GM12878 (cell line): ENCODE measurements at regions of chr7 and their contacts with region 1.

Region 1: GRCh38 chr7:95427166-95427565 is 7.7 kb downstream of the PON2 start:
- DNase-seq: no peak
- ATAC-seq: no peak
- H3K4me3 ChIP-seq: no peak overlapping the region
- H3K27ac ChIP-seq: no peak overlapping the region
- H3K4me1 ChIP-seq: no peaks in the 10 kb centered on the region
- H3K27me3 ChIP-seq: no peaks in the 10 kb centered on the region
- CTCF ChIP-seq: no peak
- EP300 ChIP-seq: no peak
- POLR2A ChIP-seq: no peak
- RAD21 ChIP-seq: no peak

Region 2: GRCh38 chr7:95324431-95324830 is 102.7 kb before region 1 on chr7 and contains the start of gene PON1:
- CTCF ChIA-PET with region 1: no interaction called
- POLR2A ChIA-PET with region 1: no interaction called
- RAD21 ChIA-PET with region 1: no interaction called
- SMC1A ChIA-PET with region 1: no interaction called
- in situ Hi-C with region 1: no loop called
- intact Hi-C with region 1: no loop called
- DNase-seq: no peak
- ATAC-seq: peak; percentile 65
- H3K4me3 ChIP-seq: peak within 1 kb of the TSS; percentile 32; the same call in 1 of the 2 replicates
- H3K27ac ChIP-seq: no peak within 1 kb of the TSS
- H3K4me1 ChIP-seq: no peaks in the 10 kb centered on the region
- H3K27me3 ChIP-seq: no peaks in the 10 kb centered on the region
- CTCF ChIP-seq: no peak
- EP300 ChIP-seq: no peak
- POLR2A ChIP-seq: no peak
- RAD21 ChIP-seq: no peak
- polyA plus RNA-seq, gene PON1: 0.10 to 0.22 TPM

Region 3: DNA sequence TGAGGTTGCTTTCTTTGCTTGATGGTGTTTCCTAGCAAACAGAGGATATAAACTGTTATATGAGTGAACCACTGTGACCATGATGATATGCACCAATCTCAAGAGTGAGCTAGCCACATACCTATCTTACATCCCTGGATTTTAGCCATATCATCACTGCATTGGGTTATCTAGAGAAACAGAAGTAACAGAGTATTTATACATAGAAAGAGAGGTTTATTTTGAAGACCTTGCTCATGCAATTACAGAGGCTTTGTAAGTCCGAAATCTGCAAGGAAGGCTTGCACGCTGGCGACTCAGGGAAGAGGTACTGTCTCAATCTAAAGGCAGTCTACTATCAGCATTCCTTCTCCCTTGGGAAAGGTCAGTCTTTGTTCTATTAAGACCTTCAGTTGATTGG is 19.5 kb after region 1 on chr7:
- CTCF ChIA-PET with region 1: interaction called, 6 read pairs
- POLR2A ChIA-PET with region 1: interaction called, 4 read pairs
- RAD21 ChIA-PET with region 1: interaction called, 10 read pairs
- SMC1A ChIA-PET with region 1: interaction called, 12 read pairs
- in situ Hi-C with region 1: no loop called
- intact Hi-C with region 1: no loop called
- DNase-seq: no peak
- ATAC-seq: no peak
- H3K4me3 ChIP-seq: no peak overlapping the region
- H3K27ac ChIP-seq: no peak overlapping the region
- H3K4me1 ChIP-seq: no peaks in the 10 kb centered on the region
- H3K27me3 ChIP-seq: no peaks in the 10 kb centered on the region
- CTCF ChIP-seq: no peak
- EP300 ChIP-seq: no peak
- POLR2A ChIP-seq: no peak
- RAD21 ChIP-seq: no peak